ENCODE measurements at regions of chr21 and their contacts with region 1.

Region 1: GRCh38 chr21:36948686-36949085 is 17.8 kb downstream of the HLCS start:
- H3K4me3 ChIP-seq: no peak overlapping the region
- H3K27ac ChIP-seq: no peak overlapping the region
- H3K4me1 ChIP-seq: no peaks in the 10 kb centered on the region; the same call in 1 of the 2 replicates
- CTCF ChIP-seq: no peak

Region 2: GRCh38 chr21:36966066-36966820 is 17.6 kb after region 1 on chr21 and contains the start of gene HLCS:
- CTCF ChIA-PET with region 1: interaction called, 11 read pairs
- POLR2A ChIA-PET with region 1: interaction called, 10 read pairs
- H3K4me3 ChIP-seq: peak within 1 kb of the TSS; percentile 80
- H3K27ac ChIP-seq: peak within 1 kb of the TSS; percentile 84
- H3K4me1 ChIP-seq: peaks cover 8% of the 10 kb centered on the region; the same call in 1 of the 2 replicates
- CTCF ChIP-seq: peak; percentile 75